ENCODE measurements at regions of chr6 and their contacts with region 1.

Region 1: GRCh38 chr6:217048-217659 is 75.1 kb upstream of the DUSP22 start:
- DNase-seq: peak; percentile 79
- ATAC-seq: peak; percentile 93
- H3K4me3 Mint-ChIP-seq: no peak overlapping the region
- H3K27ac Mint-ChIP-seq: no peak overlapping the region; the same call in 1 of the 2 replicates
- H3K4me1 Mint-ChIP-seq: peaks cover 12% of the 10 kb centered on the region
- H3K27me3 Mint-ChIP-seq: no peaks in the 10 kb centered on the region; the same call in none of the 2 replicates
- CTCF ChIP-seq: peak; percentile 74

Region 2: GRCh38 chr6:188821-189655 is 28.1 kb before region 1 on chr6:
- CTCF ChIA-PET with region 1: interaction called, 11 read pairs
- POLR2A ChIA-PET with region 1: no interaction called
- DNase-seq: peak; percentile 91
- ATAC-seq: peak; percentile 99
- H3K4me3 Mint-ChIP-seq: no peak overlapping the region
- H3K27ac Mint-ChIP-seq: no peak overlapping the region
- H3K4me1 Mint-ChIP-seq: no peaks in the 10 kb centered on the region
- H3K27me3 Mint-ChIP-seq: no peaks in the 10 kb centered on the region
- CTCF ChIP-seq: peak; percentile 56

Region 3: DNA sequence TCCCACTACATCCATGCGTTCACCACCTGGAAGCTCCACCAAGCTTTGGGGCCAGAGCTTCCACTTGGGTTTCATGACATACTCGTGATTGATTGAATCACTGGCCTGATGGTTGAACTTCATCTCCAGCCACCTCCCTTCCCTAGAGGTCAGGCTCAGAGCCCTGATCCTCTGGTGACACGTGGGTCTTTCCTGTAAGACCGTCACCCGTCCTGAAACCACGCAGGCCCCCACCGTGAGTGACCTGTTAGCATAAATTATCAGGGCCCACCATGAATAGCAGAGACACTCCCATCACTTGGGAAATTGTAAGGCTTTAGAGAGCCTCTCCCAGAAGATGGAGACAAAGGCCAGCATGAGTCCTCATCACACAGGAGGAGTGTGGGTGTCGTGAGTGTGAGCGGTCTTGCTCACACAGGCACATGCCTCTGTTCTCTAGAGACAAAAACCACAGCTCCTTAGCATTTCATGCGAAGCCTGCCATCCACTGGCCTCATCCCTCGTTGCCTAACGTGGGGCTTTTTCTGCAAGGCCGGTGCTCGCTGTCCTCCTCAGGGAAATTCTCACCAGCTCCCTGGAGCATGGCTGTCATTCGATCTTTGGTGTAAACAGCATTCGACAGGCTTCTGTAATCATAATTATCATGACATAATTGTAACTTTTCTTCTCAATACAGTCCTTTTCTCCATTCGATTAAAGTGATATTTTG is 10.1 kb after region 1 on chr6:
- CTCF ChIA-PET with region 1: interaction called, 23 read pairs
- POLR2A ChIA-PET with region 1: no interaction called
- DNase-seq: no peak
- ATAC-seq: no peak
- H3K4me3 Mint-ChIP-seq: no peak overlapping the region
- H3K27ac Mint-ChIP-seq: no peak overlapping the region
- H3K4me1 Mint-ChIP-seq: peaks cover 15% of the 10 kb centered on the region
- H3K27me3 Mint-ChIP-seq: no peaks in the 10 kb centered on the region; the same call in 1 of the 2 replicates
- CTCF ChIP-seq: no peak

Region 4: DNA sequence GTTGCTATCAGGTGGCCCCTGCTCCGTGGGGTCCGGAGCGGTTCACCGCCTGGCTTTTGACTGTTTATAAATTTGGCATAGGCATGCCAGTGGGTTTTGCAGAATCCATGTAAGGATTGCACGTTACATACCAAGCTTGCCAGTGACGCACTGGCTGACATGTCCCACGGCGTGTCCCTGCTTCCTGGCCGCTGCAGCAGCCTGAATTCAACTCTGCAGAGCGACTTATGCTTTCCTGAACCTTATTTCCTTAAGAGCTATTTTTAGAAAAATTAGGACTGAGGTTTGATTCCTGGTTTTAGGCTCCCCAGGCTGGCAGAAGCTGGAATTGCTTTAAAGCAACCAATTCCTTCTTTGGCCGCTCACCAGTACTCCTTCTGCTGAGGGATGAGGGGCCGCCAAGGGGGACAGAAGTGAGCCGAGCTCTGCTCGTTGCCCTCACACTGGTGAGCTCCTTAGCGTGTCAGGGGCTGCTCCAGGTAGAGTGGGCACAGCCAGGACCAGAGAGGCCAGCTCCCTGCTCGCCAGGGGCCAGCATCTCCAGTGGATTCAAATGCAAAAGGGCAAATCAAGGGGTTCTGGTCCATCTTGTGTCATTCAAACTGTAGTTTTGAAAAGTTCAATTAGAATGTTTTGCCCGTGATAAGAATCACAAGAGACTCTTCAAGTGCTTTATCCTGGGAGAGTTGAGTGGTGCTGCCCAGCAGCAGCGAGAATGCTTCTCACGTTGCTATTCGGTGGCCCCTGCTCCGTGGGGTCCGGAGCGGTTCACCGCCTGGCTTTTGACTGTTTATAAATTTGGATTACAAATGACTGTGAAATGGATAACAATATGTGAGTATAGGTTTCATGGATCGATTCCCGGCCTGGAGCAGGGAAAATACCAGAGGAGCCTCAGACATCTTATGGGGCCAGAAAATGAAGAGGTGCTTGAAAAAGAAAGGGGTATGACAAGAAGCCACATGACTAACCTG is 156.9 kb after region 1 on chr6:
- CTCF ChIA-PET with region 1: interaction called, 11 read pairs
- POLR2A ChIA-PET with region 1: no interaction called
- DNase-seq: no peak
- ATAC-seq: peak; percentile 80
- H3K4me3 Mint-ChIP-seq: no peak overlapping the region
- H3K27ac Mint-ChIP-seq: no peak overlapping the region
- H3K4me1 Mint-ChIP-seq: peaks cover 14% of the 10 kb centered on the region
- H3K27me3 Mint-ChIP-seq: peaks cover 21% of the 10 kb centered on the region
- CTCF ChIP-seq: no peak

Region 5: DNA sequence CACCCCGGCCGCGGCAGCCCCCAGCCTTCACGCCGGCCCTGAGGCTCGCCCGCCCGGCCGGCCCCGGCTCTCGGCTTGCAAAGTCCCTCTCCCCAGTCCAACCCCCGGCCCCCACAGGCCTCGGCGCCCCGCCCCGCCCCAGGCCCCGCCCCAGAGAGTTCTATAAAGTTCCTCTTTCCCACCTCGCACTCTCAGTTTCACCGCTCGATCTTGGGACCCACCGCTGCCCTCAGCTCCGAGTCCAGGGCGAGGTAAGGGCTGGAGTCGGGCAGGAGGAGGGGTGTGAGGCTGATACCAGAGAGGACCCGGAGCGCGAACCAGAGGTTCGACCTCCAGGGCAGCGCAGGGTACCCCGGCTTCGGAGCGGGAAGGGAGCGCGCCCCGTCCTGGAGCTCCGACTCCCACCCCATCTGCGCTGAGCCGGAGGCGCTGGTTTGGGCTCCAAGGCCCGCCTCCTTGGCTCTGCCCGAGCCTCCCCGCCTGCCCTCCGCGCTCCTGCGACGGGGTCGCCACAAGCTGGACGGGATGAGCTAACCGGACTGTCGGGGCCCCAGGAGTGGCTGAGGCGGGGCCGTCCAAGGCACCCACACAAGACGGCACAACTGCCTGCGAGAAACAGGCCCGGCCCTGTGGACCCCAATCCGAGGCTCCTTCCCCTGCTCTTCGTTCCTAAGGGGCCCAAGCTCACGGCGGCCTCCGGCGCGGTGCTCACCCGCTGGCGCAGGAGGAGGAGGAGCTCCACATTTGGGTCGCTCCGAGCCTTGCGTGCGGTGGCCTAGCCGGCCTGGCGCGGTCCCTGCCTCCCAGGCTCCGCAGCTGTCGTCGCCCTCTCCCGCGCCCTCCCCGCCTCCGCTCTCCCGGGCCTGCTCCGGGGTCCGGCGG is 174.6 kb after region 1 on chr6 and contains the start of gene IRF4:
- CTCF ChIA-PET with region 1: interaction called, 11 read pairs
- POLR2A ChIA-PET with region 1: no interaction called
- DNase-seq: peak; percentile 55
- ATAC-seq: peak; percentile 60
- H3K4me3 Mint-ChIP-seq: peak within 1 kb of the TSS; percentile 77
- H3K27ac Mint-ChIP-seq: no peak within 1 kb of the TSS
- H3K4me1 Mint-ChIP-seq: peaks cover 9% of the 10 kb centered on the region
- H3K27me3 Mint-ChIP-seq: peaks cover 90% of the 10 kb centered on the region
- CTCF ChIP-seq: no peak
- total RNA-seq, gene IRF4: 1.6 to 2.2 TPM (median 2.2 TPM) in 3 replicates

Region 6: GRCh38 chr6:408599-409102 is 191.5 kb after region 1 on chr6:
- CTCF ChIA-PET with region 1: interaction called, 19 read pairs
- POLR2A ChIA-PET with region 1: no interaction called
- DNase-seq: peak; percentile 54
- ATAC-seq: peak; percentile 99
- H3K4me3 Mint-ChIP-seq: no peak overlapping the region
- H3K27ac Mint-ChIP-seq: no peak overlapping the region
- H3K4me1 Mint-ChIP-seq: peaks cover 24% of the 10 kb centered on the region
- H3K27me3 Mint-ChIP-seq: no peaks in the 10 kb centered on the region
- CTCF ChIP-seq: no peak; the same call in 1 of the 2 replicates

Measured in WTC11 (cell line).